ENCODE measurements at regions of chr1 and their contacts with region 1.

Region 1: GRCh38 chr1:53413175-53414001 is 45.8 kb upstream of the DMRTB1 start:
- DNase-seq: peak; percentile 73
- H3K4me3 Mint-ChIP-seq: peak overlapping the region; percentile 68
- H3K27ac Mint-ChIP-seq: peak overlapping the region; percentile 95
- H3K4me1 Mint-ChIP-seq: peaks cover 86% of the 10 kb centered on the region
- H3K27me3 Mint-ChIP-seq: no peaks in the 10 kb centered on the region

Region 2: DNA sequence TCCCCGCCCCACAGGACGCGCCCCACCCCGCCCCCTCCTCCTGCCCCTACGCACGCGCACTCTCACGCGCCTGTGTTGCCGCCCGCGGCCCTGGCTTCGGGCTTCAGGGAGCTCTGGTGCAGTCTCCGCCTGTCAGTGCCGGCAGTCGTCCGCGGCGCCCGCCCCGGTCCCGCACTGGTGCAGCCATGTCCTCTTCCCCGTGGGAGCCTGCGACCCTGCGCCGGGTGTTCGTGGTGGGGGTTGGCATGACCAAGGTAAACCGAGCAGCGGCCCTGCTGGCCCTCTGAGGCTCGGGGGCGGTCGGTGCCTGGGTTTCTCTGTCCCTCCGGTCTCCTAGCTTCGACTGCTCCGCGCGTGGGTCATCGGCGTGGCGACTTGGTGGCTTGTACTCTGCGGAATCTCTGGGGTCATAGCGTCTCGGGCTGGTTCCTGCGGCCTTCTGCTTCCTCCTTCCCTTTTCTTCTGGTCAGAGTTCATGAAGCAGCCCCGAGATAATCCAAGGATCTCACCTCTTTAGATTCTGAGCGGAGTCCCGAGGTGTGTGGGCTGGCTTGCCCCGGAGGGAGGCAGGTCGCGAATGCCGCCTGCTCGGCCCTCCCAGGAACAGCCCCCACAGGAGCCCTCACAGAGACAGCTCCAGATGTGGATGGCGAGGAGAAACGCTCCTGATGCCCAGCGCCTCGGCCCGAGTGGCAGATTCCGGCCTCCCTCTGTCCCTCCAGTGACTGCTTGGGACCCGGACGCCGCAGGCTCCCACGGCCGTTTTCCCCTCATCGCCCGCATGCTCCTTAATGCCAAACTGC is 486.0 kb before region 1 on chr1 and contains the start of gene SCP2:
- intact Hi-C with region 1: loop called (anchors 10 kb)
- DNase-seq: peak; percentile 74
- H3K4me3 Mint-ChIP-seq: peak within 1 kb of the TSS; percentile 90
- H3K27ac Mint-ChIP-seq: peak within 1 kb of the TSS; percentile 83
- H3K4me1 Mint-ChIP-seq: peaks cover 15% of the 10 kb centered on the region
- H3K27me3 Mint-ChIP-seq: peaks cover 8% of the 10 kb centered on the region
- total RNA-seq, gene SCP2: 54.7 and 58.3 TPM in 2 replicates

Region 3: DNA sequence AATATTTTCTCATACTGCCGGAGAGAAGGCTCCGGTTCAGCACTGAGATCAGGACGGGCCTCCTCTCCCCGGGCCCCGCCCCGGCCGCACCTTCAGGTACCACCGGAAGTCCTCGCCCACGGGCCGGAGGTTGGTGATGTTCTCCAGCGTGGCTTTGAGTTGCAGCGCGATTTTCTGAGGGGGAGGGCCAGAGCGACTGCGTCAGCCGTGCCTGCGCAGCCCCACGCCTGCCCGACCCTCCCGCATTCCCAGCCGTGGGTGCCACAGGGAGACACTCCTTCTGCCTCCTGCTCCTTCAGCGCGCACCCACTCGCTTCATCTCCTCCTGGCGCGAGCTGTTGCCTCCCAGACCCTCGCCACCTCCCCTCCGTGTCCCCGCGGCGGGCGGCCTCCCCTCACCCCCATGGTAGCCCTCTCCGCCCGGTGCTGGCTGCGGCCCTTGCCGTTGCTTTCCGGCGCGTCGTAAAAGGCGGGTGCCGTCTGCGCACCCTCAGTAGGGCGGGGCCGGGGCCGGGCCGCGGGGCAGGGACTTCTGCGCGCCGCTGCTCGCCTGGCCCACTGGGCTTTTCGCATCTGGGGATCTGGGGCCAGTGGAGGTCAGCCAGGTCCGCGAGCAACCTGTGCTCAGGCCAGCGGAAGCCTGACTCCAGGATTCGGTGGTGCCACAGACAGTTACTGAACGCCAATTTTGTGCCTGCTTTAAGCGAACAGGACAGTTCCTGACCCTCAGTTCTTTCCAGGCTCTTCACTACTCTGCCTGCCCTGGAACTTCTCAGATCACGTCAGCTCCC is 193.0 kb before region 1 on chr1 and contains the start of gene CZIB:
- intact Hi-C with region 1: loop called (anchors 1 kb)
- DNase-seq: peak; percentile 92
- H3K4me3 Mint-ChIP-seq: peak within 1 kb of the TSS; percentile 90
- H3K27ac Mint-ChIP-seq: peak within 1 kb of the TSS; percentile 97
- H3K4me1 Mint-ChIP-seq: peaks cover 30% of the 10 kb centered on the region
- H3K27me3 Mint-ChIP-seq: peaks cover 2% of the 10 kb centered on the region
- total RNA-seq, gene CZIB: 43.6 and 45.2 TPM in 2 replicates

Region 4: DNA sequence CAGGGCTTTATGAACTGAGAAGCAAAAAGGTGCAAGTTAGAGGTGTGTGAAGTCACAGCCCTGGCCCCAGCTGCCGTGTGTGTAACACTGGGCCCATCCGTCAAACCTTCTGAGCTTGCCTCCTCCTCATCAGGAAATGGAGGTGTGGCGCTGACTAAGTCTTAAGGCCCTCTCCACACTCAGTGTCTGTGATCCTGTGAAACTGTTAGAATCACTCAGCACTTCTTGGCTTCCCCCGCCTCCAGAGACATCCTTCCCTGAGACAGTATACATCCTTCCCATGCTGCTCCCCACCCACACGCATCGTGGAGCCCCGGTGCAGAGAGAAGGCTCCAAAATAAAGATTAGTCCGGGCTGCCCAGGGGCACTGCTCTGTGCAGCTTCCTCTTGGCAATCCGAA is 118.8 kb before region 1 on chr1:
- intact Hi-C with region 1: loop called (anchors 5 kb)
- DNase-seq: peak; percentile 48
- H3K4me3 Mint-ChIP-seq: peak overlapping the region; percentile 21
- H3K27ac Mint-ChIP-seq: peak overlapping the region; percentile 70
- H3K4me1 Mint-ChIP-seq: peaks cover 40% of the 10 kb centered on the region
- H3K27me3 Mint-ChIP-seq: no peaks in the 10 kb centered on the region

Region 5: GRCh38 chr1:53367503-53368304 is 45.7 kb before region 1 on chr1:
- intact Hi-C with region 1: no loop called
- DNase-seq: peak; percentile 27
- H3K4me3 Mint-ChIP-seq: peak overlapping the region; percentile 78
- H3K27ac Mint-ChIP-seq: peak overlapping the region; percentile 72
- H3K4me1 Mint-ChIP-seq: peaks cover 15% of the 10 kb centered on the region
- H3K27me3 Mint-ChIP-seq: peaks cover 1% of the 10 kb centered on the region

Region 6: DNA sequence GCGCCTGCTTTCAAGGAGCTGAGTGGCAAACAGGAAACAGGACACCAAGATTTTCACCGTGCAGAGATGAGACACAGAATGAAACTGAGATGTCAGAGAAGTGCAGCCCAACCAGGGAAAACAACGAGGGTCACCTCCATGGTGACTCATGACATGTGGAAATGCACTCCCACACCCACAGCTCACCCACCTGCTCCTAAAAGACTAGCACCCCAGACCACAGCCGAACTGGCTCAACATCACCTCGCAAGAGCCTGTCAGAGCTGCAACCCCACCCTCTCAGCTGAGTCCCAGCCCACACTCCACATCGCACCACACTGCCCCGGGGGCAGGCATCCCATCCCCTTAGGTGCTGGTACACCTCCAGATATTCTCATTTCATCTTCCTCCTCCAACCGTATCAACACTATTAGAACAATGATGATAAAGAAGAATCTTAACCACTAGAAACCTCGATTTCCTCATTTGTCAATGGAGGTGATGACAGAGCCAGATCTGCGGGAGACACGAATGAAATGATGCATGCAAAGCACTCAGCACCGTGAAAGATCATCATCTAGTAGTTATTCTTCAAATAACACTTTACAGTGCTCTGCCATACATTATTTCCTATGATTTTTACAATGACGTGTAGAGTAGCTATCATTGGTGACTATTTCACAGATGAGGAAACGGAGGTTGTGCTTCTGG is 149.0 kb after region 1 on chr1:
- intact Hi-C with region 1: no loop called
- DNase-seq: no peak
- H3K4me3 Mint-ChIP-seq: peak overlapping the region; percentile 32
- H3K27ac Mint-ChIP-seq: peak overlapping the region; percentile 64
- H3K4me1 Mint-ChIP-seq: peaks cover 16% of the 10 kb centered on the region
- H3K27me3 Mint-ChIP-seq: peaks cover 26% of the 10 kb centered on the region

Region 7: GRCh38 chr1:53781654-53782053 is 368.3 kb after region 1 on chr1:
- intact Hi-C with region 1: loop called (anchors 5 kb)
- DNase-seq: no peak
- H3K4me3 Mint-ChIP-seq: no peak overlapping the region
- H3K27ac Mint-ChIP-seq: no peak overlapping the region
- H3K4me1 Mint-ChIP-seq: peaks cover 31% of the 10 kb centered on the region
- H3K27me3 Mint-ChIP-seq: no peaks in the 10 kb centered on the region